A673 (cell line): ENCODE measurements at regions of chr4 and their contacts with region 1.

Region 1: GRCh38 chr4:16516796-16517439 is 290.6 kb upstream of the TAPT1 start:
- DNase-seq: peak; percentile 91
- H3K4me3 ChIP-seq: no peak overlapping the region
- H3K27ac ChIP-seq: no peak overlapping the region
- H3K4me1 ChIP-seq: peaks cover 36% of the 10 kb centered on the region
- H3K27me3 ChIP-seq: no peaks in the 10 kb centered on the region
- CTCF ChIP-seq: peak; percentile 80

Region 2: DNA sequence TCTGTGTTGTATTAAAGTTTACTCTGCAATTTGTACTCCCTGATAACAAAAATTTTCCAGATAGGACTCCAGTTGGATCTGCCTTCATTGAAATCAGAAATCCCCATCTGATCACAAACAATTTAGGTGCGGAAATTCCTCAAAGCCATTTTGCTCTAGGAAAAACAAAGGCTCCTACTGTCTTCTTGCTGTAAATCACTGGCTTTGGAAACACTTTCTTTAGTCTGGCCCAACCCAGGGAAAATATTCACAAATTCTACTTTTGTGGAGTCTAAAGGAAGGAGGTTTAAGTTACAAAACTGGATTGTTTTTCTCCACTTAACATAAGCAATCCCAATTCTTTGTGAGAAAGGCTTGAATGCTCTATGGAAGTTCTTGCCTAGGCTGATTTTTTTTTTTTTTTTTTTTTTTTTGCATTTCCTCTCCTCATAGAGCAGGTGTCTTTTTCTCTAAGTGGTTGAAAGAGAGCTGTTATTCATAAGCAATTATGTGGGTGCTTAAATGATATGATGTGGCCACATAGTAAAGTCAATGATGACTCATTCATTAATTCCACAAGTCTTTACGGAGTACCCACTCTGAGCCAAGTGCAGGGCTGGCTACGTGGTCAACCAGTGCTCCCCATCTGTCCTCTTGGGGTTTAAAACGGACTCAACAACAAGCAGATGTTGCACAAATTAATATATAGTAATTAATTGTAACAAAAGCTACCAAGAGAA is 120.2 kb after region 1 on chr4:
- CTCF ChIA-PET with region 1: no interaction called
- POLR2A ChIA-PET with region 1: no interaction called
- intact Hi-C with region 1: loop called (anchors 5 kb)
- DNase-seq: peak; percentile 58
- H3K4me3 ChIP-seq: no peak overlapping the region
- H3K27ac ChIP-seq: peak overlapping the region; percentile 66
- H3K4me1 ChIP-seq: peaks cover 42% of the 10 kb centered on the region
- H3K27me3 ChIP-seq: no peaks in the 10 kb centered on the region
- CTCF ChIP-seq: no peak

Region 3: GRCh38 chr4:16752150-16752549 is 235.2 kb after region 1 on chr4:
- CTCF ChIA-PET with region 1: no interaction called
- POLR2A ChIA-PET with region 1: no interaction called
- intact Hi-C with region 1: loop called (anchors 5 kb)
- DNase-seq: peak; percentile 50
- H3K4me3 ChIP-seq: no peak overlapping the region
- H3K27ac ChIP-seq: no peak overlapping the region
- H3K4me1 ChIP-seq: peaks cover 14% of the 10 kb centered on the region
- H3K27me3 ChIP-seq: no peaks in the 10 kb centered on the region
- CTCF ChIP-seq: peak; percentile 51

Region 4: GRCh38 chr4:16916719-16917337 is 399.9 kb after region 1 on chr4:
- CTCF ChIA-PET with region 1: no interaction called
- POLR2A ChIA-PET with region 1: no interaction called
- intact Hi-C with region 1: loop called (anchors 5 kb)
- DNase-seq: peak; percentile 82
- H3K4me3 ChIP-seq: no peak overlapping the region
- H3K27ac ChIP-seq: no peak overlapping the region
- H3K4me1 ChIP-seq: no peaks in the 10 kb centered on the region
- H3K27me3 ChIP-seq: no peaks in the 10 kb centered on the region
- CTCF ChIP-seq: peak; percentile 97